Right lobe of liver (tissue), 6 donors: ENCODE measurements at regions of chr11 and their contacts with region 1.

Region 1: GRCh38 chr11:117443266-117444195 is 115.9 kb downstream of the CEP164 start:
- DNase-seq: no peak
- ATAC-seq: peak; percentile 50 to 76 (median 63)
- H3K4me3 ChIP-seq: no peak overlapping the region
- H3K27ac ChIP-seq: no peak overlapping the region
- H3K4me1 ChIP-seq: no peaks in the 10 kb centered on the region
- H3K27me3 ChIP-seq: no peaks in the 10 kb centered on the region
- CTCF ChIP-seq: peak; percentile 12 to 41 (median 25)
- POLR2A ChIP-seq: no peak

Region 2: DNA sequence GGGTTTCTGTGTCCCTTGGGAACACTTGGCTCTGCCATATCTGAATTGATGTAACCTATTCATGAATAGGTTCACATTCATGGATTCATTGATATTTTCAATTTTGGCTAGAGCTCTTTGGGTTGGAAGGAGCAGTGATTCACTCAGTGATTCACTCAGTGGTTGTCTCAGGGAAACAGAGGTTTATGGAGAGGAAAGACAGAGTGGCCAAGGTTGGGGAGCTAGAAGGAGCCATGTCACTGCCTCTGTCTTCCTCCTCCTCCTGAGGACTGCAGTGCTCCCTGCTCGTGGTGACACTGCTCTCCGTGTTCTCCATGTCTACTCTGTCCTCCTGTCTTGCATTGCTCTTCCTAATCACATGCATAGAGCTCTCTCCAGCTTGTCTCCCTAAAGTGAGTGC is 98.5 kb before region 1 on chr11:
- intact Hi-C with region 1: no loop called
- DNase-seq: no peak
- ATAC-seq: no peak
- H3K4me3 ChIP-seq: no peak overlapping the region
- H3K27ac ChIP-seq: no peak overlapping the region
- H3K4me1 ChIP-seq: no peaks in the 10 kb centered on the region
- H3K27me3 ChIP-seq: no peaks in the 10 kb centered on the region
- CTCF ChIP-seq: no peak
- POLR2A ChIP-seq: no peak

Region 3: GRCh38 chr11:117387992-117388755 is 55.4 kb before region 1 on chr11:
- intact Hi-C with region 1: no loop called
- DNase-seq: peak in 1 of 3 donors; percentile 11
- ATAC-seq: no peak
- H3K4me3 ChIP-seq: no peak overlapping the region
- H3K27ac ChIP-seq: no peak overlapping the region
- H3K4me1 ChIP-seq: no peaks in the 10 kb centered on the region
- H3K27me3 ChIP-seq: no peaks in the 10 kb centered on the region
- CTCF ChIP-seq: no peak
- POLR2A ChIP-seq: no peak

Region 4: DNA sequence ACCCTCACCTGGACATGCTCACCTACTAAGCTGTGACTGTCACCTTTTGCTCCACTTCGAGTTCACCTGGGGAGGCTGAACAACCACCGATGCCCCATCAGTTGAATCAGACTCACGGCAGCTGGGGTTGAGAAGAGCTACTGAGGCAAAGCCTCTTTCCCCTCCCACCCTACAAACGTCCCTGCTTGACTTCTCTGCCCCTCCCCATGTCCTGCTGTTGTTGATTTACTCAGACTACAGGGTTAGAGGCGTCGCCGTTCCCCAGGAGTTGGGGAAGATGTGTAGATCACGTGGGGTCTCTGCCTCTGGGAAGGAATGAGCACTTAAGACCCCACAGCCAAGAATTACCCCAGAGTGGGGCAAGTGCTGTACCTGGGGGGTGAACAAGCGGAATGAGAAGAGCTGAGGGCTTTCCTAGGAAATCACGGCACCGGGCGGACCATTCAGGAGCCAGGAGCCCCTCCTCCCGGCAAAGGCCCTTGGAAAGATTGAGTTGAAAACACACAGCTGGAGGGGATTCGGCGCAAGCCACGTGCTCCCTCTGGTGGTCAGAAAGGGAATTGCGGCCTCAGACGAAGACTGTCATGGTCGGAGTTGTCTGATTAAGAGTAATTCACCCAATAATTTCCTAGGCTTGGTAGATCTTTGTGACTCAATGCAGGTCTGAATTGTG is 374.0 kb after region 1 on chr11:
- intact Hi-C with region 1: loop called in 1 of 2 experiments (anchors 5 kb)
- DNase-seq: peak; percentile 72 to 78 (median 76)
- ATAC-seq: peak; percentile 63 to 82 (median 72)
- H3K4me3 ChIP-seq: no peak overlapping the region
- H3K27ac ChIP-seq: no peak overlapping the region
- H3K4me1 ChIP-seq: no peaks in the 10 kb centered on the region
- H3K27me3 ChIP-seq: no peaks in the 10 kb centered on the region
- CTCF ChIP-seq: peak; percentile 92 to 99 (median 98)
- POLR2A ChIP-seq: no peak